ENCODE measurements at regions of chr6 and their contacts with region 1.

Region 1: DNA sequence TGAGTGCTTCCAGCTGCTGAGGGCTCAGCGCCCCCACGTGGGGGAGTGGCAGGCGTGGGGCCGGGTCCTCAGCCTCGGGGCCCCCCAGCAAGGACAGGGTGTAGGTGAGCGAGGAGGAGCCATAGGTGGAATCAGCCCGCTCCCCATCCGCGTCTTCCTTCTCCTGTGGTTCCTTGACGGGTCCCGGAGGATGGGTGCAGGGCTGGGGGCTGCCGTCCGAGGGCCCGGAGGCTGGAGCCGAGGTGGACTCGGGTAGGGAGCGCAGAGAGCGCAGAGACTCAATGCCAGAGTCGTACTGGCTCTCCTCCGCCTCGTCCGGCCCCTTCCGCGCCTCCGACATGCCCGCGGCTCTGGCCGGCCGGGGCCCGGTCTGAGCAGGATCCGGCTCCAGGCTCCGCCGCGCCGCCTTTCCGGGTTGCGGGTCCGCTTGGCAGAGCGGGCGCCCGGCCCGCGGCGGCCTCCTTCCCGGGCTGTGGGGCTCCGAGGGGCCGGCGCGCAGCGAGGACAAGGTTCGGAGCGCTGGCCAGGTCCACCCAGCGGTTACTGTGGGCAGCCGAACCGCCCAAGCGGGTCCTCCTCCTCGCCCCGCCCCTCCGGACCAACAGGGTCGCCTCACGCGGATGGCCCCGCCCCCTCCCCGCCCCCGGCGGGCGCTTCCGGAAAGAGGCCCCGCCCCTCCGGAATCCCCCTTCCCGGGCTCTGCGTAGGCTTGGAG is at the start of gene NFKBIE:
- DNase-seq: peak in 1 of 2 experiments; percentile 99
- H3K4me3 ChIP-seq: peak within 1 kb of the TSS; percentile 57 to 85 (median 76)
- H3K27ac ChIP-seq: no peak within 1 kb of the TSS
- H3K4me1 ChIP-seq: peaks cover 12 to 43% (median 21%) of the 10 kb centered on the region in 4 experiments
- H3K27me3 ChIP-seq: peaks cover 0 to 3% (median 0%) of the 10 kb centered on the region in 4 experiments; a peak in 2 of 7 replicates
- CTCF ChIP-seq: no peak; a peak in 1 of 4 replicates
- EP300 ChIP-seq: no peak
- POLR2A ChIP-seq: peak in 1 of 2 experiments; percentile 64; a peak in 2 of 3 replicates
- RAD21 ChIP-seq: peak in 1 of 2 experiments; percentile 34; a peak in 1 of 4 replicates
- total RNA-seq, gene NFKBIE: 10.8 and 13.5 TPM in 2 replicates

Region 2: GRCh38 chr6:44275749-44276648 is 10.8 kb after region 1 on chr6:
- CTCF ChIA-PET with region 1: interaction called, 34 read pairs
- POLR2A ChIA-PET with region 1: interaction called, 11 read pairs
- DNase-seq: no peak
- H3K4me3 ChIP-seq: no peak overlapping the region
- H3K27ac ChIP-seq: no peak overlapping the region
- H3K4me1 ChIP-seq: peaks cover 5 to 16% (median 9%) of the 10 kb centered on the region in 4 experiments
- H3K27me3 ChIP-seq: peaks cover 0 to 3% (median 0%) of the 10 kb centered on the region in 4 experiments; a peak in 1 of 7 replicates
- CTCF ChIP-seq: no peak
- EP300 ChIP-seq: no peak
- POLR2A ChIP-seq: no peak
- RAD21 ChIP-seq: no peak

Region 3: GRCh38 chr6:44297063-44298038 is 32.2 kb after region 1 on chr6:
- CTCF ChIA-PET with region 1: interaction called, 330 read pairs
- POLR2A ChIA-PET with region 1: interaction called, 102 read pairs
- DNase-seq: peak in 1 of 2 experiments; percentile 87
- H3K4me3 ChIP-seq: peak overlapping the region; percentile 44 to 83 (median 68)
- H3K27ac ChIP-seq: no peak overlapping the region
- H3K4me1 ChIP-seq: peaks cover 0 to 5% (median 4%) of the 10 kb centered on the region in 4 experiments; a peak in 4 of 7 replicates
- H3K27me3 ChIP-seq: peaks cover 0 to 19% (median 14%) of the 10 kb centered on the region in 4 experiments; a peak in 6 of 7 replicates
- CTCF ChIP-seq: no peak
- EP300 ChIP-seq: no peak
- POLR2A ChIP-seq: peak in 1 of 2 experiments; percentile 38; a peak in 1 of 3 replicates
- RAD21 ChIP-seq: no peak

Region 4: DNA sequence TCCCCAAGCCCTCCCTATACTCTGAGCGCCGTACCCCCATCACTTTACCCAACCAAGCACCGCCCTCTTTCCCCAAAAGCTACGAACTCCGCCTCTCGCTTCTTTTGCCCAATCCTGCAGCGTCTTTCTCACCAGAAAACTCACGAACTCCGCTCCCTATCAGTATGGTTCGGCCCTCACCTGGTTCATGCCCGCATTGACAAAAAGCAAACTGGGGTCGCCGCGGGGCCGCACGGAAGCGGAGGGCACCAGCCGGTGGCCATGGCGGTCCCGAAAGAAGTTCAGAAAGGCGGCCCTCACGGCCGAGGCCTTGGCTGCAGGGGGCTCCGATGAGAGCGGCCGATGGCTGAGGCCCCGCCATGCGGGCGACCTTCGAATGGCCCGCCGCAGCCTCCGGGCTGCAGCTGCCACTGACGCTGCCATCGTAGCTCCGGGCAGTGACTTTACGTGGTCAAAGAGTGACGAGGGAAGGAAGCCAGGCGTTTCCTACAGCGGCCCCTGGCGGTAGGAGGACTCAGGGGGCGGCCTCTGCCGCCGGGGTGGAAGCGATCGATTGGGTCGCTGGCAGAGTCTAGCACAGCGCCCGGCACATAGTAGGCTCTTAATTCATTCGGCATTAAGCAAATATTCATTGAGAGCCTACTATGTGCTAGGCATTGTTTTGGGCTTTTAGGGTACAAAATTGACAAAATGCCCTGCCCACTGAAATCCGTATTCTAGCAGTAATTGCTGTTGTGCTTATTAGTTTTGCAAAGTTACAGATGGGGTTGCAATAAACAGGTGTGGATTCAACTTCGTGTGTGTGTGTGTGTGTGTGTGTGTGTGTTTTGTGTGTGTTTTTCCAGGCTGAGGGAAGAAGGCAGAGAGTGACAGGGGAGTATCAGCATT is 48.0 kb after region 1 on chr6 and contains the start of gene AARS2:
- CTCF ChIA-PET with region 1: interaction called, 330 read pairs
- POLR2A ChIA-PET with region 1: interaction called, 12 read pairs
- DNase-seq: peak; percentile 68 to 99
- H3K4me3 ChIP-seq: peak within 1 kb of the TSS; percentile 66 to 91 (median 88)
- H3K27ac ChIP-seq: peak within 1 kb of the TSS; percentile 64; the same call in 1 of the 2 replicates
- H3K4me1 ChIP-seq: peaks cover 3 to 6% (median 3%) of the 10 kb centered on the region in 4 experiments
- H3K27me3 ChIP-seq: peaks cover 0 to 1% (median 0%) of the 10 kb centered on the region in 4 experiments; a peak in 1 of 7 replicates
- CTCF ChIP-seq: peak; percentile 91 to 97 (median 95)
- EP300 ChIP-seq: peak in 1 of 2 experiments; percentile 21; a peak in 1 of 3 replicates
- POLR2A ChIP-seq: peak; percentile 94 to 98
- RAD21 ChIP-seq: peak; percentile 5 to 36; a peak in 2 of 4 replicates
- total RNA-seq, gene AARS2: 19.9 and 20.4 TPM in 2 replicates

Region 5: DNA sequence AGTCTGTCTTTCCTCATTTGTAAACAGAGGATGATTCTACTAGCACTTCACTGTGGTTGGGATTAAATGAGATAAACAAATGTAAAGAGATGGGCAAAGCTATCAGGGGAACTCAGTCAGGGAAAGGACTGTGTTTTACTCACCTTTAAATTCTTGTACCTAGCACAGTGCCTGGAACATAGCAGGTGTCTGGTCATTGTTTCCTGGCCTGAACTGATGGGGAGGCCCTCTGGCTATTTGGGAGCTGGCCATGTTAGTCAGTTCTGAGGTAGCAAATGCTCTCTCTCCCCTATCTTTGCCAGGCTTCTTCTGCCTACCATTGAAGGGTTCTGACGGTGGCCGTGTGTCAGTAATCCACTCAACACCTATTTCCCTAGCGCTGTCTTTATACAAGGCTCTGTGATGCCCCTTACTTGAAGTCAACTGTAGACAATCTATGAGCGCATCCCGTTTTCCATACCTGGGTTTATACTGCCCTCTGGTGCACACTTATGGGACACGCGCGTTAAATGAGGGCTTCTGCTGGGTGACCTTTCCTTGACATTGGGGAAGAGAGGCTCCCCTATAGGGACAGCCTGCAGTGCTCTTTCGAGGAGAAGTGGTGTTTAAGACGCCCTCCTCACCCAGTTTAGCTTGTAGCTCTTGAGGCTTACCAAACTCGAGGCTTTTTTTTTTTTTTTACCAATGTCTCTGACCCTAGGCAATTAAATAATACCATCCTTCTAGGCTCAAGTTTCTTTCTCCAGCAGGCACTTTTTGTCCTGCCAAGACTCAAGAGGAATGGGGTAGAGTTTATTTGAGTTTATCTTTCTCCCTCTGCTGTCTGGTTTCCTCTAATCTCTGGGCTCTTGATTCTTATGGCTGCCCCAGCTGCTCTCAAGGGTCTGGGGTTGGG is 73.3 kb after region 1 on chr6:
- CTCF ChIA-PET with region 1: interaction called, 153 read pairs
- POLR2A ChIA-PET with region 1: interaction called, 11 read pairs
- DNase-seq: peak; percentile 59 to 81
- H3K4me3 ChIP-seq: no peak overlapping the region
- H3K27ac ChIP-seq: no peak overlapping the region
- H3K4me1 ChIP-seq: peaks cover 0 to 5% (median under 1%) of the 10 kb centered on the region in 4 experiments; a peak in 3 of 7 replicates
- H3K27me3 ChIP-seq: peaks cover 3 to 6% (median 5%) of the 10 kb centered on the region in 4 experiments; a peak in 5 of 7 replicates
- CTCF ChIP-seq: peak; percentile 73 to 87 (median 85)
- EP300 ChIP-seq: no peak
- POLR2A ChIP-seq: no peak
- RAD21 ChIP-seq: peak; percentile 94 to 96